Naive thymus-derived CD8-positive, alpha-beta T cell (primary cell): ENCODE measurements at regions of chr2 and their contacts with region 1.

Region 1: DNA sequence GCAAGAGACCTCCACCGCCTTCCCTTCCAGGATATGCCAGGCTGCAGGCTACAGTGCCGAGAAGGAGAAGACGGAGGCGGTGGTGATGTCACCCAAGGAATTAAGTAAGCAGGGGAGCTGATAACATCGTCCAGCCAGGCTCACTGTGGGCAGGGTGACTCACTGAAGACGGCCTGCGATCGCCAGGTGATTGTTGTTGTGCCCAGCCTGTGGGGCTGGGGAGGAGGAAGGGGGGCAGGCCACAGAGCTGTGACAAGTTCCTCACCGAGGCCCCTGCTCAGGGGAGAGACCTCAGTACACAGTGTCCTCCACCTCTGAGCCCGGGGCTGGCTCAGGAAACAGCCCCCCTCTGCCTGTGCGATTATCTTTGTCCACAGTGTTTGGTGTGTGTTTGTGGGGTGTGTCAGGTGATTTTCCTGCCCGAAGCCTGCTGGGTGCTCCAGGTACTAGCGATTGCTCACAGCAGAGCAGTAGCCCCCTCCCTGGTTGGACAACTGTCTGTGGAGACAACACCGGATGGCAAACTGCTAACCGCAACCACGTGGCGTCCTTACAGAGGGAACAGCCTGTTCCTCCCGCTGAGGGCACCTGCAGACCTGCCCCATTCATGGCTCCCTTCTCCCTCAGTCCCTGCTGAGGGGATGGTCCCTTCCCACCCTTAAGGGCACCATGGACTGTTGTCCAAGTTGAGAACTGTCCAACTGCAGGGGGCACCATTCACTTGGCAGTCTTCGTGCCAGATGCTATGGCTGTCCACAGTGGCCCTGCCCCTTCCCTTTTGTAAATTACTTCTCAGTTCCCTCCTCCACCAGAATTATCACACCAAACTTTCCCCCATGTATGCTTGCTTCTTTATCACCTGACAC is 95.1 kb downstream of the ZFP36L2 start:
- DNase-seq: peak; percentile 45 to 94 (median 88)
- ATAC-seq: peak; percentile 37 to 58
- H3K4me3 Mint-ChIP-seq: peak overlapping the region; percentile 65 to 90 (median 76)
- H3K27ac Mint-ChIP-seq: peak overlapping the region; percentile 96 to 100 (median 100)
- H3K4me1 Mint-ChIP-seq: peaks cover 55 to 93% (median 90%) of the 10 kb centered on the region in 4 donors
- H3K27me3 Mint-ChIP-seq: no peaks in the 10 kb centered on the region

Region 2: GRCh38 chr2:42906557-42907411 is 224.5 kb before region 1 on chr2:
- POLR2A ChIA-PET with region 1: no interaction called
- DNase-seq: peak in 1 of 10 donors; percentile 44
- ATAC-seq: no peak
- H3K4me3 Mint-ChIP-seq: no peak overlapping the region
- H3K27ac Mint-ChIP-seq: no peak overlapping the region
- H3K4me1 Mint-ChIP-seq: peaks cover 0 to 7% (median 3%) of the 10 kb centered on the region in 4 donors
- H3K27me3 Mint-ChIP-seq: peaks cover 0 to 25% (median 17%) of the 10 kb centered on the region in 5 donors

Region 3: DNA sequence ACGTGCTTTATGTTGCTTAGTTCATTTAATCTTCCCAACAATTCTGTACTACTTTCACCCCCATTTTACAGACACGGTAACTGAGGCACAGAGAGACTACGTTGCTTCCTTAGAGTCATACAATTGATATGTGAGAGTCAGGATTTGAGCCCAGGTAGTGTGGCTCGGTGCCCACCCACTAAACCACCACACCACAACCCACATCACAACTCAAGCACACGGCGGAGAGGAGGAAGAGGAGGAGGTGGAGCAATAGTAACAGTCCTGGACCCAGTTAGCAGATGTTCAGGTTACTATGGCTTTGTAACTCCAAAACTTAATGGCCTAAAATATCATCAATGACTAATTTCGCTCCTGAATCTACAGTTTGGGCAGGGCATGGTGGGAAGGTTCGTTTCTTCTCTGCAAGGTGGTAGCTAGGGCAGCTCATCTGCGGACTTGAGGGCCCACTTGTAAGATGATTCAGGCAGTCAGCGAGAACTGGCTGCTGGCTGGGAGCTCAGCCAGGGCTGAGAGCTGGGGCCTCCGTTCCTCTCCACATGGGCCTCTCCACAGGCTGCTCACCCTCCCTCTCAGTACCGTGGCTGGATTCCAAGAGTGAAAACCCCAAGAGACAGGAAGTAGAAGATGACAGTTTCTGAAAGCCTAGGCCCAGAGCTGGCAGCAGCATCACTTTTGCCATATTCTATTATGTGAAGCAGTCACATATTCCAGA is 71.9 kb before region 1 on chr2:
- POLR2A ChIA-PET with region 1: interaction called, 10 read pairs
- DNase-seq: peak; percentile 19 to 84 (median 62)
- ATAC-seq: peak; percentile 89 to 90
- H3K4me3 Mint-ChIP-seq: peak overlapping the region; percentile 34 to 76 (median 58)
- H3K27ac Mint-ChIP-seq: peak overlapping the region; percentile 84 to 95 (median 90)
- H3K4me1 Mint-ChIP-seq: peaks cover 27 to 50% (median 37%) of the 10 kb centered on the region in 4 donors
- H3K27me3 Mint-ChIP-seq: no peaks in the 10 kb centered on the region

Region 4: DNA sequence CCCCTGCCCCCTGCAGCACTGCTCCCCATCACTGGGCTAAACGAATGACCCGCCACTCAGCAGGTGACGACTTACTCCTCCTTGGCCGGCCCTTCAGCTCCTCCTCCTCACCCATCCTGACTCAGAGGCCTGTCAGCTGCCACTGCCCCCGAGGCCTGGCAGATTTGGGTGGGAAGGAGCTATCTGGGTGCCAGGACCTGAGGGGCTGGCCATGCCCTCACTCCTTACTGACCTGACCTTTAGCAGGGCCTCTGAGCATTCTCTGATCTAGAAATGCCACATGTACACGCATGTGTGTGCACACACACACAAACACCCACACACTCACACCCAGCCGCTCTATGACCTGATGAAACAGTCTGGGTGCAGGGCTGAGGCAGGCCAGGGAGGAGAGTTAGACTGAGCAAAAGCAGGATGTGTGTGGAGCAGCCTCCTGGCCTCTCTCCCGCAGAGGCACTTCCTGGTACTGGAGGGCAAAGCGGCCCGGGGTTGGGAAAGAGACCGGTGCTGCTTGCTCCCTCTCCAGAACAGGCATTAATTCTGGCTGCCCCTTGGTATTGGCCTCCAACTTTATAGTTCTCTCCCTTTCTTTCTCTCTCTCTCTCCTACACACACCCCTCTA is 27.1 kb after region 1 on chr2:
- POLR2A ChIA-PET with region 1: interaction called, 1,351 read pairs
- DNase-seq: peak in 3 of 10 donors; percentile 46 to 72 (median 56)
- ATAC-seq: peak; percentile 43 to 60
- H3K4me3 Mint-ChIP-seq: peak overlapping the region; percentile 76 to 89 (median 82)
- H3K27ac Mint-ChIP-seq: peak overlapping the region; percentile 94 to 100 (median 98)
- H3K4me1 Mint-ChIP-seq: peaks cover 45 to 93% (median 89%) of the 10 kb centered on the region in 4 donors
- H3K27me3 Mint-ChIP-seq: no peaks in the 10 kb centered on the region

Region 5: DNA sequence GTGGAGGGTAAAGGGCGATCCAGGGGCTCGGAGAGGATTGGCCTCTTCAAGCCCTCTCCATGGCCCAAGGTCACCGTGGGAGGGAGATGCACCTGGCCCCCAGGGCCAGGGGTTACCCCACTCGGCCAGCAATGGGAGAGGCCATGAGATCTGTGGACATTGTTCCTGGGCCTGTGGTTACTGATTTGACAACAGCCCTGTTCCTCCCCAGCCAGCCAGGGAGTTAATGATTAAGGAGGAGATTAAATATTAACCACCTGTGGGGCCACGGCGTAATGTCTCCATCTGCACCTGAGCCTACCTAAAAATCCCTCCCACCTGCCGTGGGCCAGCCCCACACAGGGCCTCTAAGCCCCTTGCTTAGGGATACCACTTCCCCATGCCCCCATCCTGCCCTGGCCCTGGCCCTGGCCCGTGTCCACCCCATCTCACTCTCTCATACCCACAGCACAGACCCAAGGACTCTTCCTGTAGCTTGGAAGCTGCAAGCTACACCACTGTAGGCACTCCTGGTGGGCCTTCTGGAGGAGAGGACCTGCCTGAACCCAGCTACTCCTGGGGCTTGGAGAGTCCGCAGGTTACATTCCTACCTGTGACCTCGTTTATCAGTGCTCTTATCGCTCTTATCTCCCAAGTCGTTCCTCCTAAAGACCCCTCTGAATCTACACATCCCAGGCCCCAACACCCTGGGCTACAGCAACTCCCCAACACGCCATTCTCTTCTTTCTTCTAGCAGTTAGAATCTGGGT is 63.0 kb after region 1 on chr2:
- POLR2A ChIA-PET with region 1: interaction called, 172 read pairs
- DNase-seq: no peak
- ATAC-seq: peak; percentile 2 to 13
- H3K4me3 Mint-ChIP-seq: peak overlapping the region; percentile 81 to 96 (median 90)
- H3K27ac Mint-ChIP-seq: peak overlapping the region; percentile 96 to 100 (median 99)
- H3K4me1 Mint-ChIP-seq: peaks cover 36 to 76% (median 66%) of the 10 kb centered on the region in 4 donors
- H3K27me3 Mint-ChIP-seq: no peaks in the 10 kb centered on the region